HepG2 (cell line): ENCODE measurements at regions of chr14 and their contacts with region 1.

Region 1: GRCh38 chr14:31207755-31208545 is at the start of gene HECTD1:
- DNase-seq: peak; percentile 93
- ATAC-seq: peak; percentile 86
- H3K4me3 ChIP-seq: peak within 1 kb of the TSS; percentile 89 to 96 (median 95)
- H3K27ac ChIP-seq: peak within 1 kb of the TSS; percentile 94
- H3K4me1 ChIP-seq: peaks cover 35% of the 10 kb centered on the region
- H3K27me3 ChIP-seq: no peaks in the 10 kb centered on the region; a peak in 1 of 5 replicates
- CTCF ChIP-seq: peak; percentile 87
- EP300 ChIP-seq: peak; percentile 52 to 68
- POLR2A ChIP-seq: peak in 1 of 2 experiments; percentile 97; a peak in 2 of 4 replicates
- RAD21 ChIP-seq: peak; percentile 100
- total RNA-seq, gene HECTD1: 560 and 761 TPM in 2 replicates

Region 2: DNA sequence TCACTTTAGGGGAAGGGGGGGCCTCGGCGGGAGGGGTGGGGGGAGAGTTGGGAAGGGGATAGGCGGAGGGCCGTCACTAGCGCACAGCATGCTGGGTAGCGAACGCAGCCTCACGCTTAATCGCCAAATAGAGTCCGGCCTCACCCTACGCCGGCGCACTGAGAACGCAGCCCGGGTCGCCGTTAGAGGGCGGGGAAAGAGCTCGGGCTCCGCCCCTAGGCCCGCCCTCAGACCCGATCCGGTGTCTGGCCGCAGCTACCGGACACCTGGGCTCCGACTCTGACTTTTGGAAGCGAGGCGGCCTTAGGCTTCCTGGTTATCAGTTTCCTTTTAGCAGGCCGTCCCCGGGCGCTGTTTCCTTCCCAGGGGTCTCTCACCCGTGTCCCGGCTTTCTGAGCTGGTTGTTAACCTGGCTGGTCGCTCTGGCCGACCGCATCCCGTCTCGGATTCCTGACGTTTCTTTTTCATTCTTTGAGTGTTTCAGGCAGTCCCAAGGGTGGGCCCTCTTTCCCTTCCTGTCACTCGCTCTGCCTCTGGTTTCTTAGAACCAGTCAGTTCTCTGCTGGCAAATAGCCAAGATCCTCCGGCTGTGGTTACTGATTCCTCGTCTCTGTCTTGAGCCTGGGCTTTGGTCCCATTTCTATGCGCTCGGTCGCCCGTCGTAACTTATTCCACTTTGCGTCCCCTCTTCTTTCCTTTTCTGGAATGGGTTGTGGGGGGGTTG is 181.4 kb before region 1 on chr14:
- CTCF ChIA-PET with region 1: no interaction called
- POLR2A ChIA-PET with region 1: interaction called, 32 read pairs
- in situ Hi-C with region 1: no loop called
- intact Hi-C with region 1: loop called (anchors 5 kb)
- DNase-seq: peak; percentile 99
- ATAC-seq: peak; percentile 93
- H3K4me3 ChIP-seq: peak overlapping the region; percentile 96 to 97 (median 96)
- H3K27ac ChIP-seq: peak overlapping the region; percentile 73
- H3K4me1 ChIP-seq: peaks cover 73% of the 10 kb centered on the region
- H3K27me3 ChIP-seq: peaks cover 0 to 5% of the 10 kb centered on the region in 2 experiments; a peak in 1 of 5 replicates
- CTCF ChIP-seq: peak; percentile 16; the same call in 1 of the 2 replicates
- EP300 ChIP-seq: peak in 1 of 2 experiments; percentile 19; a peak in 1 of 4 replicates
- POLR2A ChIP-seq: peak in 1 of 2 experiments; percentile 96; a peak in 2 of 4 replicates
- RAD21 ChIP-seq: peak; percentile 64

Region 3: DNA sequence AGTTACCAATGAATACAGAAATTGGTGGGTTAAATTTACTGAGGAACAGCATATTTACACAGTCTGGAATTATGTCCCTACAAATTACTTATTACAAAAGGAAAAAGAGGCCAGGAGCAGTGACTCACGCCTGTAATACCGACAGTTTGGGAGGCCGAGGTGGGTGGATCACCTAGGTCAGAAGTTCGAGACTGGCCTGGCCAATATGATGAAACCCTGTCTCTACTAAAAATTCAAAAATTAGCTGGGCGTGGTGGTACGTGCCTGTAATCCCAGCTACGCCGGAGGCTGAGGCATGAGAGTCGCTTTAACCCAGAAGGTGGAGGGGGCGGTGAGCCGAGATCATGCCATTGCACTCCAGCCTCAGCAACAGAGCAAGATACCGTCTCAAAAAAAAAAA is 53.0 kb before region 1 on chr14:
- CTCF ChIA-PET with region 1: no interaction called
- POLR2A ChIA-PET with region 1: no interaction called
- in situ Hi-C with region 1: no loop called
- intact Hi-C with region 1: no loop called
- DNase-seq: no peak
- ATAC-seq: no peak
- H3K4me3 ChIP-seq: no peak overlapping the region
- H3K27ac ChIP-seq: no peak overlapping the region
- H3K4me1 ChIP-seq: no peaks in the 10 kb centered on the region
- H3K27me3 ChIP-seq: no peaks in the 10 kb centered on the region
- CTCF ChIP-seq: no peak
- EP300 ChIP-seq: no peak
- POLR2A ChIP-seq: no peak
- RAD21 ChIP-seq: no peak

Region 4: DNA sequence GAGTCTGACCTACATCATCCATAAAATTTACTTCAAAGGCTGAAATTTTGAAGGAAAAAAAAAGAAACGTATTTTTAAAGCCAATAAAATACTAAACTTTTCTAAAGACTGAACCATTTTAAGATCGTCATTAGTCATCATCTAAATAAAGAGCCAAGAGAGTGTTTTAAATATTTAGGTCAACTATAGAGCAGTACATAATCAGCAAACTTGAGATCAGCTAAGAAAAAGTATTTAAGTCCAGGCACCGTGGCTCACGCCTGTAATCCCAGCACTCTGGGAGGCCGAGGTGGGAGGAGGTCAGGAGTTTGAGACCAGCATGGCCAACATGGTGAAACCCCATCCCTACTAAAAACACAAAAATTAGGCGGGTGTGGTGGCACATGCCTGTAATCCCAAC is 35.9 kb before region 1 on chr14:
- CTCF ChIA-PET with region 1: no interaction called
- POLR2A ChIA-PET with region 1: no interaction called
- in situ Hi-C with region 1: no loop called
- intact Hi-C with region 1: no loop called
- DNase-seq: no peak
- ATAC-seq: no peak
- H3K4me3 ChIP-seq: no peak overlapping the region
- H3K27ac ChIP-seq: no peak overlapping the region
- H3K4me1 ChIP-seq: peaks cover 3% of the 10 kb centered on the region
- H3K27me3 ChIP-seq: no peaks in the 10 kb centered on the region
- CTCF ChIP-seq: no peak
- EP300 ChIP-seq: no peak
- POLR2A ChIP-seq: no peak
- RAD21 ChIP-seq: no peak

Region 5: GRCh38 chr14:31229638-31230229 is 21.8 kb after region 1 on chr14:
- CTCF ChIA-PET with region 1: no interaction called
- POLR2A ChIA-PET with region 1: interaction called, 178 read pairs
- in situ Hi-C with region 1: no loop called
- intact Hi-C with region 1: loop called (anchors 1 kb)
- DNase-seq: peak; percentile 100
- ATAC-seq: peak; percentile 99
- H3K4me3 ChIP-seq: peak overlapping the region; percentile 0 to 14 (median 1); a peak in 1 of 6 replicates
- H3K27ac ChIP-seq: peak overlapping the region; percentile 72
- H3K4me1 ChIP-seq: peaks cover 62% of the 10 kb centered on the region
- H3K27me3 ChIP-seq: no peaks in the 10 kb centered on the region
- CTCF ChIP-seq: peak; percentile 53
- EP300 ChIP-seq: peak; percentile 100
- POLR2A ChIP-seq: peak; percentile 38 to 66; a peak in 3 of 4 replicates
- RAD21 ChIP-seq: peak; percentile 90

Region 6: GRCh38 chr14:31270196-31270772 is 62.3 kb after region 1 on chr14:
- CTCF ChIA-PET with region 1: interaction called, 12 read pairs
- POLR2A ChIA-PET with region 1: interaction called, 323 read pairs
- in situ Hi-C with region 1: no loop called
- intact Hi-C with region 1: no loop called
- DNase-seq: peak; percentile 77
- ATAC-seq: peak; percentile 73
- H3K4me3 ChIP-seq: no peak overlapping the region
- H3K27ac ChIP-seq: no peak overlapping the region
- H3K4me1 ChIP-seq: peaks cover 66% of the 10 kb centered on the region
- H3K27me3 ChIP-seq: no peaks in the 10 kb centered on the region
- CTCF ChIP-seq: peak; percentile 94
- EP300 ChIP-seq: no peak
- POLR2A ChIP-seq: no peak
- RAD21 ChIP-seq: peak; percentile 53

Region 7: DNA sequence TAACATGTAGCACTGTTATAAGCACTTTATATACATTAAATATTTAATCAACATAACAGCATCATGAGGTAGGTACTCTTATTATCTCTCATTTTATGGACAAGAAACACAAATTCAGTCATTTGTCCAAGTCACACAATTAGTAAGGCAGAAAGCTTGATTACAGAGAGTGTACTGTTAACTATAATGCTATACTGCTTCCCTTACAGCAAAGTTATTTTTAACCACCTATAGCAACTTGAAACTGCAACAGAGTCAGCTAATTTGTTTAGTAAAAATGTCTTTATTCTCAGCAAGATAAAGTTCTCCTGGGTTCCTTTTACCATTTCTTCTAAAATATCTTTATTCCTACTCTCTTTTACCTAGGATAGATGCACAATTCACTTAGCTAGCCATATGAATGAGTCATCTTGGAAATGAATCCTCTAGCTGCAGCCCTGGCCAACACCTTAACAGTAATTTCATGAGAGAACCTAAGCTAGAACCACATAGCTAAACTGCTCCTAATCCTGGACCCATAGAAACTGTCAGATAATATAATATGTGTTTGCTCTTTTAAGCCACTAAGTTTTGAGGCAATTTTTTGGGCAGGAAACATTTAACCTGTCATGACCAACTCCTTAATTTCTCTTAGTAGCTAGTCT is 89.9 kb after region 1 on chr14:
- CTCF ChIA-PET with region 1: no interaction called
- POLR2A ChIA-PET with region 1: interaction called, 18 read pairs
- in situ Hi-C with region 1: no loop called
- intact Hi-C with region 1: no loop called
- DNase-seq: no peak
- ATAC-seq: peak; percentile 22; the same call in 1 of the 3 replicates
- H3K4me3 ChIP-seq: no peak overlapping the region
- H3K27ac ChIP-seq: no peak overlapping the region
- H3K4me1 ChIP-seq: peaks cover 18% of the 10 kb centered on the region
- H3K27me3 ChIP-seq: no peaks in the 10 kb centered on the region
- CTCF ChIP-seq: no peak
- EP300 ChIP-seq: no peak
- POLR2A ChIP-seq: no peak
- RAD21 ChIP-seq: no peak

Region 8: DNA sequence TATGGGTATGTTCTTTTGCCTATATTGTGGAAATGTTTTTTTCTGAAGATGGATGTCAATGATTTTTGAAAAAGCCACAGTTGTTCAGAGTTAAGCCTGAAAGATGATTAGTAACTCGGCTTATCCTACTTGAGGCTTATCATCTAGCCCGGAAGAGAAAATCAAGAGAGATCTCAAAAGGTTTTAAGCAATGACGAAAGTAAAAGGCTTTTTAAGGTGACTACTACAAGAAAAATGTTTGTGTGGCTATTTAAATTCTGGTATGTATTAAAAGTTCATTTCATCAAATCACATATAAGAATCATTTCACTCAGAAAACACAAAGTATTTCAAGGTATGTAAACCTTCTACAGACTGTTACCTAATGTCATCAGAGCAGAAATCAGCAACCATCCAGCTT is 172.2 kb after region 1 on chr14:
- CTCF ChIA-PET with region 1: no interaction called
- POLR2A ChIA-PET with region 1: interaction called, 11 read pairs
- in situ Hi-C with region 1: no loop called
- intact Hi-C with region 1: no loop called
- DNase-seq: no peak
- ATAC-seq: no peak
- H3K4me3 ChIP-seq: no peak overlapping the region
- H3K27ac ChIP-seq: no peak overlapping the region
- H3K4me1 ChIP-seq: peaks cover 26% of the 10 kb centered on the region
- H3K27me3 ChIP-seq: no peaks in the 10 kb centered on the region
- CTCF ChIP-seq: no peak
- EP300 ChIP-seq: no peak
- POLR2A ChIP-seq: no peak
- RAD21 ChIP-seq: no peak

Region 9: GRCh38 chr14:31405599-31406232 is 197.8 kb after region 1 on chr14:
- CTCF ChIA-PET with region 1: no interaction called
- POLR2A ChIA-PET with region 1: no interaction called
- in situ Hi-C with region 1: no loop called
- intact Hi-C with region 1: no loop called
- DNase-seq: no peak
- ATAC-seq: no peak
- H3K4me3 ChIP-seq: no peak overlapping the region
- H3K27ac ChIP-seq: no peak overlapping the region
- H3K4me1 ChIP-seq: peaks cover 6% of the 10 kb centered on the region
- H3K27me3 ChIP-seq: no peaks in the 10 kb centered on the region
- CTCF ChIP-seq: no peak
- EP300 ChIP-seq: no peak
- POLR2A ChIP-seq: no peak
- RAD21 ChIP-seq: no peak